ENCODE measurements at regions of chr12 and their contacts with region 1.

Region 1: GRCh38 chr12:48183091-48183875 is at the start of gene CCDC184:
- ATAC-seq: peak; percentile 61 to 86 (median 83)
- H3K4me3 ChIP-seq: peak within 1 kb of the TSS; percentile 56 to 98 (median 86)
- H3K27ac ChIP-seq: peak within 1 kb of the TSS; percentile 60 to 90
- H3K4me1 ChIP-seq: peaks cover 13 to 14% of the 10 kb centered on the region in 2 donors
- total RNA-seq, gene CCDC184: 2.0 to 46.3 (median 29.3) TPM

Region 2: DNA sequence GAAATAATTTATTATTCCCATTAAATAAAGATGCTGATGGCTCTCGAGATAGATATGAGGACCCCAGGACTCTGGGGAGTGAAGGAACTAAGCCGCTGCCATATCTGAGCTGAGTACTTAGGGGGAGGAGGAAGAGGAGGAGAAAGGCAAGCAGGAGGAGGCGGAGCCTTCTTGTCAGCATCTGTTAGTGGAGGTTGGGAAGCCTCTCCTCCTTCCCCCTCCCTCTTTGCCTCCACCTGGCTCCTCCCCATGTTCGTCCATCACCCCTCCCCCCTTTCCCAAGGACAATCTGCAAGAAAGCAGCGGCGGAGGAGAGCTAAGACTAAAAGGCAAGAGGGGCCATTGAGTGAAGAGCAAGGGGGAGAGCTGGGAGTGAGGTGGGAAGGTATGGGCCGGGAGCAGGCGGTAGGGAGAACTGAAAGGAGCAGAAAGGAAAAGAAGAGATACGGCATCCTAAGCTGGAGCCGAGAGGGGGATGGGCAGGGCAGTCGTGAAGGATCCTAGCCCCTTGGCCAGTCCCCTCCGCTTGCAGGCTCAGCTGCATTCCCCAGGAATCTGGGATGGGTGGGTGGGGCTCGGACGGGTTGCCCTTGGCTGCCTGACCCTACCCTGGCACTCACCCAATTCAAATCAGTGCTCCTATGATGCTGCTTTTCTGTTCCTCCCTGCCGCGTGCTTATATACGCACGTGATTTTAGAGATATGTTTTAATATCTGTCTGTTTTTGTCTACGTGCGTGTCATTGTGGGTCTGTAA is 64.0 kb before region 1 on chr12 and contains the start of gene PFKM:
- in situ Hi-C with region 1: no loop called
- ATAC-seq: peak; percentile 89 to 97 (median 94)
- H3K4me3 ChIP-seq: peak within 1 kb of the TSS; percentile 56 to 98 (median 72)
- H3K27ac ChIP-seq: peak within 1 kb of the TSS; percentile 81 to 87
- H3K4me1 ChIP-seq: peaks cover 25 to 31% of the 10 kb centered on the region in 2 donors
- total RNA-seq, gene PFKM: 66.7 to 146 (median 81.6) TPM

Region 3: GRCh38 chr12:48454667-48455066 is 271.4 kb after region 1 on chr12:
- in situ Hi-C with region 1: loop called in 1 of 9 experiments (anchors 25 kb)
- ATAC-seq: peak in 3 of 8 experiments; percentile 85 to 96 (median 91)
- H3K4me3 ChIP-seq: no peak overlapping the region
- H3K27ac ChIP-seq: no peak overlapping the region
- H3K4me1 ChIP-seq: no peaks in the 10 kb centered on the region

Measured in motor neuron (in vitro differentiated cells).